Prostate gland (tissue), 2 donors: ENCODE measurements at regions of chr22 and their contacts with region 1.

Region 1: DNA sequence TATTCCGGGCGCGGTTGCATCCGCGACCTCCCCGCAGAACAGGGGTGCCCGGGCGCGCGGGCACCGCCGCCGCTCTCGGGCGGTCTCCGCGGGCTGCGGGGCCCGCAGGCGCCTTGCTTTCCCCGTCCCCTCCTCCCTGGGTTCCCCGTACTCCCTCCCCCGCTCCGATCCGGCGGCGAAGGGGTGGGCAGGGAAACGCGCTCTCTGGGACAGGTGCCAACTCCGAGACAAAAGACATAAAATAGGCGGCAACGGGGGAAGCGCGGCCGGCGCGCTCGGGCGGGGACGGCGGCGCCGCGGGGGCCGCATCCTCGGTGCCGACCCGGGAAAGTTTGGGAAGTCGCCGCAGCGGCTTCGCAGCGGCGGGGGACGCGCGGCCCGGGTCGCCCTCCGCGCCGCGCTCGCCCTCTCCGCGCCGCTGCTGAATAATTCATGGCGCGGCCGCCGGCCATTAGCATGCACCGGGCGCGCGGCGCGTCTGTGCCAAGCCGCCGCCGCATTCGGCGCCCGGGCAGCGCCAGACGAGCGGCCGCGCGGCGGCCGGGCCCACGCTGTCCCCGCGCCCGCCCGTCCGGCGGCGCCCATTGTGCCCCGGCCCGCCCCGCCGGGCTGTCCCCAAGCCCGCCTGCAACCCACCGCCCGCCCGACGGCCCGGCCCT is 78.7 kb upstream of the PPARA start:
- DNase-seq: peak; percentile 93
- H3K4me3 ChIP-seq: peak overlapping the region; percentile 78 to 93
- H3K27ac ChIP-seq: peak overlapping the region; percentile 96 to 99
- H3K4me1 ChIP-seq: no peaks in the 10 kb centered on the region
- H3K27me3 ChIP-seq: no peaks in the 10 kb centered on the region
- CTCF ChIP-seq: peak in 1 of 4 experiments; percentile 9
- POLR2A ChIP-seq: peak; percentile 71

Region 2: DNA sequence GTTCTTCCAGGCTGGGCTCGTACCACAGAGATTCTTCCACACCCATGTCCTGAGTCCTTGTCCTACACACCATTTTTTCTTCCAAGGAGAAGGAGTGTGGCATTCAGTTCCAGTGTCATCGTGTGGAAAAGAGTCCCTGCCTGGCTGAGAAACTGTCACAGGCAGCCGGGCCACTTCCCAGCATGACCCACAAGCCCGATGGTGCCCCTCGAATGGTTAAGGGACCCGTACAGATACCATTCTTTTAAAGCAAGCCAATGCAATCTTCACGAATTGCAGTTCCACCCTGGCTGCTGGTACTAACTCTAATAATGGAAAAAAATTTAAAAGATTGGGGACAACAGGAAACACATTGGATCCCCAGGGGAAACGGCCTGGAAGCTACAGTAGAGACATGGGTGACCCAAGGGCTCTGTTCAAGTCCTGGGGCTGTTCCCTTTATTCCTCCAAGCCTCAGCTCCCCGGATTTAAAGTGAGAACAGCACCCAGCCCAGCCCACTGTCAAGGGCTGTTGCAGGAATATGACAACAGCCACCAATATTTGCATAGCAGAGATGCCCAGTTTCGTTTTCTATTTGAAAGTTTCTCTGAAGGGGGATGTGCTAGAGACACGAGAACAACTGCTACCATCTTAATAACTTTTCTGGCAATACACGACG is 13.7 kb before region 1 on chr22:
- intact Hi-C with region 1: loop called (anchors 1 kb)
- DNase-seq: peak; percentile 84
- H3K4me3 ChIP-seq: peak overlapping the region; percentile 3 to 31
- H3K27ac ChIP-seq: peak overlapping the region; percentile 100
- H3K4me1 ChIP-seq: peaks cover 27% of the 10 kb centered on the region
- H3K27me3 ChIP-seq: no peaks in the 10 kb centered on the region
- CTCF ChIP-seq: no peak
- POLR2A ChIP-seq: peak; percentile 82

Region 3: GRCh38 chr22:46213052-46213451 is 141.5 kb after region 1 on chr22:
- intact Hi-C with region 1: no loop called
- DNase-seq: no peak
- H3K4me3 ChIP-seq: no peak overlapping the region
- H3K27ac ChIP-seq: no peak overlapping the region
- H3K4me1 ChIP-seq: no peaks in the 10 kb centered on the region
- H3K27me3 ChIP-seq: no peaks in the 10 kb centered on the region
- CTCF ChIP-seq: no peak
- POLR2A ChIP-seq: no peak